Endothelial cell of umbilical vein (primary cell): ENCODE measurements at regions of chr19 and their contacts with region 1.

Region 1: DNA sequence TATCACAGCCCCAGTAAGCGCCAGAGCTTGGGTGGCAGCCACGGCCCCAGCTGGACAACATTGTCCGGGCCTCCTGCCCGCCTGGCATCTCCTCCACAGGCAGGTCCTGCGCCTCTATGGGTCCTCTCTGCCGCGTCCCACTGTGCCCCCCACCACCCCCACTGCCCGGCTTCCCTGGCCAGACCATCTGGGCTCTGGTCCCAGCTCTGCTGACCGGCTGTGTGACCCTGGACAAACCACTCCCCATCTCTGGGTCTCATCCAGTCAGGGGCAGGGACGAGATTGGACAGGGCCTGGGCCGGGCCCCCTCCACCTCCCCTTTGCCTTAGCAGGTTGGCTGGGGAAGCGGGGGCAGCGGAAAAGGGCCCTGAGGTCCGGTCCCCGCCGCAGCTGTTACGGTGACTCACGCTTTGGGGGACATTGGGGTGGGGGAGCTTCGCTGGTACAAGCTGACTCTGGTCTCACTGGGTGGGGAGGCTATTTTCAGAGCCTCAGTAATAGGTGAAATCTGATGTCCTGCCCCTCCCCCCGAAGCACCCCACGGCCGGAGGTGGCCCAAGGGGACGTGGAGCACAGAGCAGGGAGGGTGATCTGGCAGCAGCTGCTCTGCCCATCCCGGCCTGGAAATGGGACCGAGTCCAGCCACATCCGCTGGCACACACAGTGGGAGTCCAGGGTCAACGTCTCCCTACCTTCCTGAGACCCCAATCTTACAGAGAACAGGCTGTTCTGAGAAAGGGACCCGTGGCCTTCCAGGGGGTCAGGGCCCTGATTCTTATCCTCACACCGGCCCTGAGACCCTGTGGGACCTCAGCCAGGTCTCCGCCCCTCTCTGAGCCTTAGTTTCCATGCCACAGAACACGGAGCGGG is 9.1 kb downstream of the NFIC start:
- DNase-seq: peak; percentile 83
- H3K4me3 ChIP-seq: no peak overlapping the region
- H3K27ac ChIP-seq: peak overlapping the region; percentile 46
- H3K4me1 ChIP-seq: peaks cover 21% of the 10 kb centered on the region
- H3K27me3 ChIP-seq: no peaks in the 10 kb centered on the region
- CTCF ChIP-seq: no peak
- POLR2A ChIP-seq: no peak

Region 2: DNA sequence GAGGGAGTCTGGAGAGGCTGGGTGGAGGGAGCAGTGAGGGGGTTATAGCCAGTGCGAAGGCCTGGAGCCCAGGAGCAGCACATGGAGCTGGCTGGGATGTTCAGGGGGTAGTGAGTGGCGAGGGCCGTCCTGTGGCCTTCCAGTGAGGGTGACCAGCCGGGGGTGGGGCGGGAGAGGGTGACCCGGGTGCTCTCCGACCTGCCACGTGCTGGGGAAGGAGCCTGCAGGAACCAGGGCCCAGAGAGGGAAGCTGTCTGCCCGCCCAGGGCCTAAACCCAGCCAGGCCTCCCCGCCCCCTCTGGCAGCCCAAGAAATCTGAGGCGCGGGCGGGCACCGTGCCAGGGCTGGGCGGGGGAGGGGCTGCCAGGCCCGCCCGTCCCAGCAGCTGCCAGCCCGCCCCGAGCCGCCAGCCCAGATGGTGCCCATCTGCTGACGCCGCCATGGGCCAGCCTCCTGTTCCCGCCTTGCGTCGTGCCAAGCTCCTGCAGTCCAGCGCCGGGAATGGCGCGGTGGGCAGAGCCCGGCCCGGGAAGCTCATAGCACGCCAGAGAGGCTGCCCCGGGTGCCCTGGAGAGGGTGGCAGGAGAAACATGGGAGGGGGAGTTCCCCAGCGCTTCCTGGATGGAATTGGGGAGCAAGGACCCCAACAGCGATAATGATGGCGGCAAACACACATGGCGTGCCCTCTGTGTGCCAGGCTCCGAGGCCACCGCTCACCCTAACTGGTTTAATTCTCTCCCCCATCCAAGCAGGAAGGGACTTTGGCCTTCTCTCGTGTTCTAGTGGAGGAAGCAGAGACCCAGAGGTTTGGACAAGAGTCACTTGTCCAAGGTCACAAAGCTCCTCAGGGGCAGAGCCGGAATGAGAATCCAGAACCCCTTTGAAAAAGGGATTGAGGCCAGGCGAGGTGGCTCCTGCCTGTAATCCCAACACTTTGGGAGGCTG is 12.5 kb after region 1 on chr19:
- CTCF ChIA-PET with region 1: interaction called, 6 read pairs
- POLR2A ChIA-PET with region 1: interaction called, 3 read pairs
- dilution Hi-C with region 1: no loop called
- intact Hi-C with region 1: loop called (anchors 2 kb)
- DNase-seq: peak; percentile 68
- H3K4me3 ChIP-seq: no peak overlapping the region
- H3K27ac ChIP-seq: peak overlapping the region; percentile 30
- H3K4me1 ChIP-seq: peaks cover 23% of the 10 kb centered on the region
- H3K27me3 ChIP-seq: no peaks in the 10 kb centered on the region
- CTCF ChIP-seq: no peak
- POLR2A ChIP-seq: no peak

Region 3: DNA sequence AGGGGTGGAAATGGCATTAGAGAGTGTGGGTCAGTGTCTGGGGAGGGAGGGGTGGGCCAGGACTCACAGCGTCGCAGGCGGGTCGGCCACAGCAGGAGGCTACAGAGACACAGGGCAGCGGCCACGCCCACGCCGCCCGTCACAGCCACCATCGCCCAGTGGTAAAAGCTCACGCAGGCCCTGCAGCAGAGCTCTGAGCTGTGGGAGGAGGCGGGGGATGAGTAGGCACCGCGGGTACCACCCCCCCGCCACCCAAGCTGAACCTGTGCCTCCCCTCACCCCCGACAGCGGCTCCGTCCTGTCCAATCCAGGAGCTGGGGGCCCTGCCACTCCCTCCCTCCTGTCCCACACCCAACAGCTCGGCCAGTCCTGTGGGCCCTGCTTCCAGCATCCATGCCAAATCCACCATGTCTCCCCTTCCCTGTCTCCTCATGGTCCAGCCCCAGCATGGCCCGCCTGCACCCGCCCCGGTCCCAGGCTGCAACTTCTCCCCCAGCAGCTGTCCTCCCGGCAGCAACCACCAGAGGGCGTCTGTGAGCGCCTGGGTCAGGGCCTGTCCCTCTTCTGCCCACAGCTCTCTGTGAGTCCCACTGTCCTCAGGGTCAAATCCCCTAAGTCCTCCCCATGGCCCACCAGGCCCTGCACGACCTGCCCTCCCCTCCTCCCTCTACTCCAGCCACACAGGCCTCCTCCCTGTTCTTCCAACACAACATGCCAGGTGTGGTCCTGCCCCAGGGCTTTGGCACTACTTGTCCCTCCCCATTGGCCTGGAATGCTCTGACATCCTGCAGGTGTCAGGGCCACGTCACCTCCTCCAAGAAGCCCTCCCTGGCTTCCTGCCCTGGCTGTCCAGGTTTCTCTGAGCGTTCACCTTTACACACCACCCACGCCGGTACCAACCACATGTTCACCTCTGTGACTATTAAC is 169.5 kb after region 1 on chr19:
- CTCF ChIA-PET with region 1: no interaction called
- POLR2A ChIA-PET with region 1: no interaction called
- dilution Hi-C with region 1: no loop called
- intact Hi-C with region 1: no loop called
- DNase-seq: peak; percentile 47
- H3K4me3 ChIP-seq: no peak overlapping the region
- H3K27ac ChIP-seq: no peak overlapping the region
- H3K4me1 ChIP-seq: no peaks in the 10 kb centered on the region
- H3K27me3 ChIP-seq: no peaks in the 10 kb centered on the region
- CTCF ChIP-seq: peak; percentile 90 to 99
- POLR2A ChIP-seq: no peak